Common myeloid progenitor, CD34-positive (primary cell): ENCODE measurements at regions of chr10 and their contacts with region 1.

Region 1: DNA sequence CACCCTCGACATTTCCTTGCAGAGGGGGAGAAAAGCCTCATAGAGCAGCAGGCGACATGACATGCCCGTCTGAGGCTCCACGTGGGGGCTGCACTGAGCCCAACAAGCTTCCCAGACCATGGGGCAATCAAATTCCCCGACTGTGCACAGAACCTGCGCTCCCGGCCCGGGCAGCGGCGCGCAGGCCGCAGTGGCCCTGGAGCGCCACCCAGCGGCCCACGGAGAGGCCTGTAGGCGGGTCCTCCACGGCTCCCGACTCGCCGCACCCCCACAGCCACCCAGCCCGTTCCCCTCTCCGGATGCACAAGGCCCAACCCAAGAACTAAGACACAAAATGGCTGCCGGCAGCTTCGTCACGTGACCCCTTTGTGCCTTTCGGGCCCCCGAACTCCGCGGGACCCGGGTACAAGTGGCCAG is 816 bp downstream of the EPC1 start:
- DNase-seq: peak; percentile 96 to 98 (median 98)
- H3K4me3 ChIP-seq: peak overlapping the region; percentile 84 to 97 (median 91)
- H3K27ac ChIP-seq: peak overlapping the region; percentile 100
- H3K4me1 ChIP-seq: peaks cover 16 to 34% (median 26%) of the 10 kb centered on the region in 4 experiments
- H3K27me3 ChIP-seq: no peaks in the 10 kb centered on the region

Region 2: GRCh38 chr10:32328499-32328898 is 17.6 kb before region 1 on chr10:
- CTCF ChIA-PET with region 1: interaction called, 20 read pairs
- POLR2A ChIA-PET with region 1: no interaction called
- DNase-seq: peak in 1 of 3 donors; percentile 21
- H3K4me3 ChIP-seq: no peak overlapping the region
- H3K27ac ChIP-seq: no peak overlapping the region
- H3K4me1 ChIP-seq: peaks cover 2 to 44% (median 12%) of the 10 kb centered on the region in 4 experiments
- H3K27me3 ChIP-seq: no peaks in the 10 kb centered on the region

Region 3: GRCh38 chr10:32360884-32361283 is 14.7 kb after region 1 on chr10:
- CTCF ChIA-PET with region 1: interaction called, 17 read pairs
- POLR2A ChIA-PET with region 1: no interaction called
- DNase-seq: no peak
- H3K4me3 ChIP-seq: no peak overlapping the region
- H3K27ac ChIP-seq: no peak overlapping the region
- H3K4me1 ChIP-seq: peaks cover 0 to 21% (median 5%) of the 10 kb centered on the region in 4 experiments
- H3K27me3 ChIP-seq: no peaks in the 10 kb centered on the region

Region 4: DNA sequence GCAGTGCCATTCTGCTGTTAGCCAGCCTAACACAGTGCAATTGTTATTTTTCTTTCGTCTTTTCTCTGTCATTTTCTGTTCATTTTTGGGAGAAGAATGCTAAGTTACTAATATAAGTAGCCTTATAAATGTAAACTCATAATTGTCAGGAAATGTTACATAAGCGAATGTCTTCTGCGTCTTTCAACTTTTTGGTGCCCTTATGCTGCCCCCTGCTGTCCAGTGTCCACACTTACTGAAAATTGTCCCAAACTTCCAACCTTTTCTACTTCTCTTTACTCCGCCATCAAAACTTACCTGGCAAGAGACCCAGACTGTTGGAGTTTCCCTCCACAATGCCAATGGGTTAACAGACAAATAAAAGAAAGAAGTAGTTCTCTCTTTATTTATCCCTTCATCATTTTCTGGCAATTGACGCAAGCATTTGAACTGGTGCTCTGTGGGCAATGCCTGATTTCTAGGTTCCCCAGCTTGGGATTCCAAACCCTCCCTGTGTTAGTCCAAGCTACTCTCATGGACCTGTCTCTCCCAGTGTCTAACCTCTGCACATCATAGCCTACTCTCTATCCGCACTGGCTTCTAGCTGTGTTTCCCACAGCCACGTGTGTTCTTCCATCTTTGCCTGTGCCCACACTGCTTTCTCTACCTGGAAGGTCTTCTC is 21.8 kb after region 1 on chr10:
- CTCF ChIA-PET with region 1: interaction called, 17 read pairs
- POLR2A ChIA-PET with region 1: interaction called, 4 read pairs
- DNase-seq: peak; percentile 82 to 90 (median 86)
- H3K4me3 ChIP-seq: peak overlapping the region in 1 of 7 experiments; percentile 52
- H3K27ac ChIP-seq: peak overlapping the region in 1 of 2 experiments; percentile 63
- H3K4me1 ChIP-seq: peaks cover 4 to 14% (median 7%) of the 10 kb centered on the region in 4 experiments
- H3K27me3 ChIP-seq: no peaks in the 10 kb centered on the region

Region 5: DNA sequence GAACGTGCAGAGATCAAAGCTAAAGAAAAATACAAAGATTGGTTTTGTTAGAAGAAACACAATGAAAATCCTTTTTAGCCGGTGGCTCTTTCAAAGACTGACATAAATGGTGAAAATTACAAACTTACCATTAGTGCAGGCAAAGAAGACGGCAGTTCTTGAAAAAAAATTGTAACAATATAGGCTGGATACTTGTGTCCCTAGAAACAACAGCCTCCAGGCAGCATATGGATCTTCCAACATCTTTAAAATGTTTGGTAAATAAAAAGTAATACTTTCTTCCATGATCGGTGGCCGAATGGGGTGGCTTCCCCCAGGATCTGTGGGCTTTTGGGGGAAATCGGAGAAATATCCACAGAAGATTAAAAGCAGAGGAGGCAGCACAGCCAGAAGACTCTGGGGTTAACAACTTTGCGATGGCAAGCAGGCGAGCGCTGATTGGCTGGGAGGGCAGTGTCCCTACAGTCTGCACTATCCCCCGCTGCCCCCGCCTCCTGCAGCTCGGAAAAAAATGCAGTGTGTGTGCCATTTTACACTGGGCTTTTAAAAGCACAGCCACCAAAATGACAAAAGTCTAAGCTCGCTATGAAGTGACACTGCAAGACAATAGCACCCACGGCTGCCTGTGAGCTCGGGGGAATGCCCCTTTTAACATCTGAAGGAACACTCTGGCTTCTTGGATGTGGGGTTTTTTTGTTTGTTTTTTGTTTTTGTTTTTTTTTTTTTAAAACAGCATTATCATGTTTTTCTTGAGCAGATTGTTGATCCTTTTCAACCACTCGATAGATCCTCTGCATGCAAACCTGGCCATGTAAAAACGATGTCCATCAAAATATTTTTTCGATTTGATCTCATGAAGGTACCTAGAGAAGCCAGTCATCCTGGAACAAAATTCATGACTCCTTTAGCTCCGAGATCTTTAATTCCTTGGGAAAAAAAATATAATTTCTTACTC is 32.5 kb after region 1 on chr10:
- CTCF ChIA-PET with region 1: interaction called, 4 read pairs
- POLR2A ChIA-PET with region 1: interaction called, 10 read pairs
- DNase-seq: peak; percentile 92 to 97 (median 96)
- H3K4me3 ChIP-seq: peak overlapping the region; percentile 34 to 99 (median 95)
- H3K27ac ChIP-seq: peak overlapping the region; percentile 67 to 93
- H3K4me1 ChIP-seq: peaks cover 0 to 22% (median 11%) of the 10 kb centered on the region in 4 experiments
- H3K27me3 ChIP-seq: no peaks in the 10 kb centered on the region

Region 6: DNA sequence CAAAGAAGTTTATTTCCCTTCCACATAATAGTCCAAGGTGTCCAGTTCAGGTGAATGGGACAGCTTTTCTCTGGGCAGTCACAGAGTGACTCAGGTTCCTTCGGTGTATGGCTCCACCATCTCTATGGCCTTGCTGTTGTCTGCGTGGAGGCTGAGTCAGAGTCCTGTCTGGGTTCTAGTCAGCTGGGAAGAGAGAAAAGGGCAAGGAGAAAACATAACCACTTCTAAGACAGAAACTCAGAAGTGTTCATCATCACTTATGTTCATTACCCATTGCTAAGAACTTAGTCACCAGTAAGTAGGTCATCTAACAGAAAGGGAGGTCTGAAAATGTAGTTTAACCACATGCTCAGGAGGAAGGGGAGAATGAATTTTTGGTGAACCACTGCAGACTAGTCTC is 67.4 kb after region 1 on chr10:
- CTCF ChIA-PET with region 1: no interaction called
- POLR2A ChIA-PET with region 1: no interaction called
- DNase-seq: no peak
- H3K4me3 ChIP-seq: no peak overlapping the region
- H3K27ac ChIP-seq: no peak overlapping the region
- H3K4me1 ChIP-seq: no peaks in the 10 kb centered on the region
- H3K27me3 ChIP-seq: peaks cover 0 to 2% (median 0%) of the 10 kb centered on the region in 5 experiments